ENCODE measurements at regions of chr12 and their contacts with region 1.

Region 1: GRCh38 chr12:10749700-10750384 is 26.7 kb upstream of the YBX3 start:
- DNase-seq: peak; percentile 93
- ATAC-seq: peak; percentile 74
- H3K4me3 ChIP-seq: peak overlapping the region; percentile 59
- H3K27ac ChIP-seq: no peak overlapping the region
- H3K4me1 ChIP-seq: peaks cover 14% of the 10 kb centered on the region
- H3K27me3 ChIP-seq: no peaks in the 10 kb centered on the region
- CTCF ChIP-seq: peak; percentile 95

Region 2: DNA sequence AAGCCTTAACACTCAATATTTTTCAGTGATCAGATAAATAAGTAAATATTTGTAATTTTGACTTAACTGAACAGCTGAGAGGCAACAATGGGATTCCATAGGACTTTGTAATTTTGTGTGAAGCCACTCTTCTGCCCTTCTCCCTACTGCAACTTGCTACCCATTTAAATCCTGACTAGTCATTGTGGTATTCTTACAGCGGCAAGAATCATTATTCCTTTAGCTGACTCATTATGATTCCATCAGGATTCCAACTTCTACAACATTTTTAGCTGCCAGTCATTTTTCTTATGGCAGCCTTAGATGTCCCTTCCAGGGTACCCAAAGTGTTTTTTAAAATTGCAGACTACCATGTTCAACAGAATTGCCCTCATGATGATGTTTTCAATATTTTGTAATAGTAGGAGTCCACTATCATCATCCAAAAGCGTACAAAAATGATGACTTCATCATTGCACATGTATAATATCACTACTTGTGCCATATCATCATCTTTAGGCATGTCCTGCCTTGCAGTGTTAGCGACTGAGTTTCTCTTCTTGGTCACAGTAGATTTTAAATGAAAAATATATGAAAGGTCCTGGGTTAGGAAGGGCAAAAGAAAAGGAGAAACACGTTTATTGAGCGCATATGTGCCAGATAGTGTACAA is 131.4 kb before region 1 on chr12:
- CTCF ChIA-PET with region 1: no interaction called
- POLR2A ChIA-PET with region 1: no interaction called
- intact Hi-C with region 1: loop called (anchors 5 kb)
- DNase-seq: peak; percentile 85
- ATAC-seq: peak; percentile 84
- H3K4me3 ChIP-seq: no peak overlapping the region
- H3K27ac ChIP-seq: peak overlapping the region; percentile 77
- H3K4me1 ChIP-seq: peaks cover 46% of the 10 kb centered on the region
- H3K27me3 ChIP-seq: no peaks in the 10 kb centered on the region
- CTCF ChIP-seq: no peak

Region 3: GRCh38 chr12:10722905-10723866 is 26.7 kb before region 1 on chr12 and contains the start of gene YBX3:
- CTCF ChIA-PET with region 1: interaction called, 3 read pairs
- POLR2A ChIA-PET with region 1: no interaction called
- intact Hi-C with region 1: loop called (anchors 1 kb)
- DNase-seq: peak; percentile 77
- ATAC-seq: peak; percentile 52
- H3K4me3 ChIP-seq: peak within 1 kb of the TSS; percentile 98
- H3K27ac ChIP-seq: peak within 1 kb of the TSS; percentile 98
- H3K4me1 ChIP-seq: peaks cover 50% of the 10 kb centered on the region
- H3K27me3 ChIP-seq: no peaks in the 10 kb centered on the region
- CTCF ChIP-seq: no peak
- total RNA-seq, gene YBX3: 85.9 and 104 TPM in 2 replicates

Region 4: GRCh38 chr12:10802587-10802986 is 52.7 kb after region 1 on chr12 and contains the start of gene TAS2R7:
- CTCF ChIA-PET with region 1: no interaction called
- POLR2A ChIA-PET with region 1: no interaction called
- intact Hi-C with region 1: no loop called
- DNase-seq: no peak
- ATAC-seq: no peak
- H3K4me3 ChIP-seq: no peak within 1 kb of the TSS
- H3K27ac ChIP-seq: no peak within 1 kb of the TSS
- H3K4me1 ChIP-seq: no peaks in the 10 kb centered on the region
- H3K27me3 ChIP-seq: peaks cover 17% of the 10 kb centered on the region
- CTCF ChIP-seq: no peak
- total RNA-seq, gene TAS2R7: not detected in 2 replicates